AG04449 (cell line): ENCODE measurements at regions of chr2 and their contacts with region 1.

Region 1: DNA sequence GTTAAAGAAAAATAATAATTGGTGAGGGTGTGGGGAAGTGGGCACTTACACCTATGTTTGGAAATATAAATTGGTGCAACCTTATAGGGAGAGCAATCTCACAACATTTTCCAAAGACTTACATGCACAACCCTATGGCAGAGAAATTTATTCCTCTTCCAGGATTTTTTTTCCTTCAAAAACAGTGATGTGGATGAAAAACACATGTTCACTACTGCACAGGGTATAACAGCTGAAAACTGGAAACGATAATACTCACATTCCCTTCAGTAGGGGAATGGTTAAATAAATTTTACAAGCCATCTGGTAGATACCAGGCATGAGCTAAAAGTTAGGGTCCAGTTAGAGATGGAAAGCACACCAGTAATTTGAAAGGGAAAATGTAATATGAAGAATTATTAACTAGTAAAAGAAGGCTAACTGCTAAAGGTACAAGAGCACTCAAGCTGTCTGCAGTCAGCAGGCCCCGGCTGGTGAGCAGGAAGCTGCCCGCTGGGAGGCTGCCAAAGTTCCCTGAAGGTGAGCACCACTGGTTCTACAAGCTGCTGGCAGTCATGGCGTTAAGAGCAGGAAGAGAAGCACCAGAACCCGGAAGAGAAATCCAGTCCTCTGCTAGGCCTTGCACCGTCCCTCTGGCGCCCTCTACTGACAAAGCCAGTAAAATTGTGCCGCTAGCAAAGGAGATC is 28.4 kb upstream of the CASP8 start:
- DNase-seq: peak; percentile 47
- H3K4me3 ChIP-seq: no peak overlapping the region
- CTCF ChIP-seq: peak; percentile 87

Region 2: GRCh38 chr2:200728630-200729029 is 503.3 kb before region 1 on chr2:
- CTCF ChIA-PET with region 1: no interaction called
- POLR2A ChIA-PET with region 1: no interaction called
- DNase-seq: no peak
- H3K4me3 ChIP-seq: no peak overlapping the region
- CTCF ChIP-seq: no peak

Region 3: DNA sequence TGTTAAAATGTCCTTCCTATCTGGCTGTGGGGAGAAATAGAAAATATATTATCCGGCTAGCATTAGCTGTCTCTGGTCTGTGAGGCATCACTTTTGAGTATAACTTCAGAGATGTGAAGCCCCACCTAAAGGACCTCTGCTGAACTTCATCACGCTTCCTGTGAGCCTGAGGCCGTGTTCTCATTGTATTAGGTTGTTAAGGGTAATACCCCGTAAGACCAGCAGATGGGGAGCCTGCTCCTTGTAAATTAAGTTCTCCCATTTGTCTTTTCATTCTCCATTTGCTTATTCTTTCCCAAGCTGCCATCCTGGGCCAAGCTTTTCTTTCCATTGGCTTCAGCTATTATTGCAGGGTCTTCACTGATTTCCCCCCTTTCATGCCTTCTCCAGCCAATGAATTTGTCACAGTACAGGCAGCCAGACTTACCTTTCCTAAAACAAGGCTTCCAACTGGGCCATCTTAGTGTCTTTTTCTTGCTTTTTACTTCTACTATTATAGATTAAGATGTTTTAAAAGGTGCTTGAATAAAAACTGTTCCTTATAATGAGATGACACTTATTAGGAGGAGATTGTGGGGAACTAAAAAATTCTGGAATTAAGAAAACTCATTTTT is 330.4 kb before region 1 on chr2:
- CTCF ChIA-PET with region 1: interaction called, 37 read pairs
- POLR2A ChIA-PET with region 1: interaction called, 4 read pairs
- DNase-seq: peak; percentile 66
- H3K4me3 ChIP-seq: no peak overlapping the region
- CTCF ChIP-seq: peak; percentile 67

Region 4: GRCh38 chr2:201201371-201201770 is 30.6 kb before region 1 on chr2:
- CTCF ChIA-PET with region 1: interaction called, 10 read pairs
- POLR2A ChIA-PET with region 1: no interaction called
- DNase-seq: no peak
- H3K4me3 ChIP-seq: no peak overlapping the region
- CTCF ChIP-seq: no peak

Region 5: DNA sequence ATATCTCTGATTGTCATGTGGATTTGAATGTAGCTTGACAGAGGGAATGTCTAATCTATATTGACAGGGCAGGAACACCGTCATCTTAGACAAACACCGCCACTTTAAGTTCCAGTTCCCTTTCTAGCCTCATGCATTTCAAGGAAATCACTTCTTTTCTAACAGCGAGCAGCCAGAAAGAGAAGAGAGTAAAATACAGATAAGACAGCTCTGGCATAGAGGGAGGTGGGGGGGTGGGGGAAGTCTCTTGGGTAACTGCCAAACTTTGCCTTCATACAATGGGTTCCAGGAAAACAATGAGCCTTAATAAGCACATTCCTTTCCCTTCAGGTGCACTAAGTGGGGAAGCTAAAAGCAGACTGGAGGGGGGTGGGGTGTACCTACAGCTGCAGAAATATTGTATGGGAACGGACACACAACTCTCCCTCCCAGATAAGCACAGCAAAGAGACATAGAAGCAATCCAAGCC is 11.8 kb before region 1 on chr2:
- CTCF ChIA-PET with region 1: interaction called, 63 read pairs
- POLR2A ChIA-PET with region 1: no interaction called
- DNase-seq: no peak
- H3K4me3 ChIP-seq: no peak overlapping the region
- CTCF ChIP-seq: no peak

Region 6: GRCh38 chr2:201363857-201364560 is 132.1 kb after region 1 on chr2:
- CTCF ChIA-PET with region 1: interaction called, 50 read pairs
- POLR2A ChIA-PET with region 1: no interaction called
- DNase-seq: no peak
- H3K4me3 ChIP-seq: no peak overlapping the region
- CTCF ChIP-seq: peak; percentile 63